ENCODE measurements at regions of chr18 and their contacts with region 1.

Region 1: DNA sequence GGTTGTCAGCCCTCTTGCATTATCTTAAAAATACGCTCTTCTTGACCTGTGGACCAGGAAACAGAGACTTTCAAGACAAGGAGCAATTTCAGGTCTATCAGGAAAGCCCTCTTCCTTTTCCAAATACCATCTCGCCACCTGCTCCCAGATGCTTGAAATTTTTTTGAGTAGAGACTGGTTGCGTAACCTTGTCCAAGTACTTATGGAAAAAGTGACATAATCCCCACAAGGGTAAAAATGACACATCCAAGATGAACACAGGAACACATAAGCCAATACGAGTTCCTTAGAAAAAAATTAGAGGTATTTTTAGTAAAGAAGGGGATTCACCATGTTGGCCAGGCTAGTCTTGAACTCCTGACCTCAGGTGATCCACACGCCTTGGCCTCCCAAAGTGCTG is 1.7 kb downstream of the SERPINB13 start:
- DNase-seq: no peak
- ATAC-seq: no peak
- H3K4me3 ChIP-seq: no peak overlapping the region
- H3K27ac ChIP-seq: no peak overlapping the region
- H3K4me1 ChIP-seq: no peaks in the 10 kb centered on the region
- H3K27me3 ChIP-seq: no peaks in the 10 kb centered on the region
- CTCF ChIP-seq: no peak

Region 2: GRCh38 chr18:63487676-63488075 is 101.2 kb before region 1 on chr18:
- intact Hi-C with region 1: no loop called
- DNase-seq: no peak
- ATAC-seq: no peak
- H3K4me3 ChIP-seq: no peak overlapping the region
- H3K27ac ChIP-seq: no peak overlapping the region
- H3K4me1 ChIP-seq: no peaks in the 10 kb centered on the region
- H3K27me3 ChIP-seq: no peaks in the 10 kb centered on the region
- CTCF ChIP-seq: no peak

Region 3: DNA sequence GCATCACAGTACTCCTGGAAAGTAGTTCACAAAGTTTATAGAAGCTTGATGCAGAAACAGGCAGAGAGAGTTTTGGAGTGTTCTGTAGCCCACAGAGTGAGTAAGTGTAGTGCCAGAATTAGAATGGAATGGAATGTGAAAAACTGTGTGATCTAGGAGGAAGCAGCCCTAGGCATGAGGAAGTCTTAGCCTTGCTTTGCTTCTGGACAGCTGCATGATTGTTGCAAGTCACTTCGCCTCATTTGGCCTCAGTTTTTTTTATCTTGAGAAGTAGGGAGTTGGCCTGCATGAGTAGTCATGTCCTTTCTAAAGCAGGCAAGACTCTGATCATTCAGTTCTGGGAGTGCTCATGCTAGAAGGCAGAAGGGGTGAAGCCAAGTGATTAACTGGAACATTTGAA is 35.8 kb before region 1 on chr18:
- intact Hi-C with region 1: loop called in 1 of 2 experiments (anchors 1 kb)
- DNase-seq: no peak
- ATAC-seq: peak; percentile 28 to 79 (median 70)
- H3K4me3 ChIP-seq: no peak overlapping the region
- H3K27ac ChIP-seq: no peak overlapping the region
- H3K4me1 ChIP-seq: no peaks in the 10 kb centered on the region
- H3K27me3 ChIP-seq: no peaks in the 10 kb centered on the region
- CTCF ChIP-seq: no peak

Measured in psoas muscle (tissue), 8 donors.